ENCODE measurements at regions of chr12 and their contacts with region 1.

Region 1: DNA sequence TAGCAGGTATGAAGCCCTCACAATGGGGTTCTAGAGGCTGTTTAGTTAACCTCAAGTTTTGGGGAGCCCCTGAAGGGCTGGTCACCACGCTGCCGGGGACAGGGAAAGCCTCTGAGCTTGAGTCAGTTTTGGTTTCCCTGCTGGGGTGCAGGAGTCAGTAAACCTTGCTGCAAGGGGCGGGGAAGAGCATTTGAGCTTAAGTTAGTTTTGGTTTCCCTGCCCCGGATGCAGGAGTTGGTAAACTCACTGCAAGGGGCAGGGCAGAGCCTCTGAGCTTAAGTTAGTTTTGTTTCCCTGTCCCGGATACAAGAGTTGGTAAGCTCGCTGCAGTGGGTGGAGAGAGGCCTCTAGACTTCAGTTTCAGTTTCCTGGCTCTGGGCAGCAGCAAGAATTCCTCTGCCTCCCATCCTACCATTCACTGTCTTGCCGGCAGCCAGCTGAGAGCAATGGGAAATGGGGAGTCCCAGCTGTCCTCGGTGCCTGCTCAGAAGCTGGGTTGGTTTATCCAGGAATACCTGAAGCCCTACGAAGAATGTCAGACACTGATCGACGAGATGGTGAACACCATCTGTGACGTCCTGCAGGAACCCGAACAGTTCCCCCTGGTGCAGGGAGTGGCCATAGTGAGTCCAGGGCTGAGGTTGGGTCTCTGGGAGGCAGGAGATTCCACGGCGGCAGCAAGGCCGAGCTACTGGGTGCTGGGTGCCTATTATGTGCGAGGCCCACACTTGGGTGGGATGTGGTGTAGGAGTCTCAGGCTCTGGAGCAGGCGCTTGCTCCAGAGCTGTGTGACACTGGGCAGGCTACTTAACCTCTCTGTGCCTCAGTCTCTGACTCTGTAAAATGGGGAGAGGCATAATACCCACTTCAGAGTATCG is at the start of gene OAS2:
- DNase-seq: peak; percentile 51
- ATAC-seq: peak; percentile 92
- H3K4me3 Mint-ChIP-seq: peak within 1 kb of the TSS; percentile 96
- H3K27ac Mint-ChIP-seq: peak within 1 kb of the TSS; percentile 98
- H3K4me1 Mint-ChIP-seq: peaks cover 55% of the 10 kb centered on the region
- H3K27me3 Mint-ChIP-seq: no peaks in the 10 kb centered on the region
- CTCF ChIP-seq: no peak
- total RNA-seq, gene OAS2: 46.0 and 51.9 TPM in 2 replicates

Region 2: GRCh38 chr12:112906712-112907414 is 71.5 kb before region 1 on chr12 and contains the start of gene OAS1:
- CTCF ChIA-PET with region 1: interaction called, 13 read pairs
- POLR2A ChIA-PET with region 1: interaction called, 48 read pairs
- intact Hi-C with region 1: loop called (anchors 1 kb)
- DNase-seq: no peak
- ATAC-seq: peak; percentile 80
- H3K4me3 Mint-ChIP-seq: peak within 1 kb of the TSS; percentile 88
- H3K27ac Mint-ChIP-seq: peak within 1 kb of the TSS; percentile 92
- H3K4me1 Mint-ChIP-seq: peaks cover 88% of the 10 kb centered on the region
- H3K27me3 Mint-ChIP-seq: no peaks in the 10 kb centered on the region
- CTCF ChIP-seq: no peak
- total RNA-seq, gene OAS1: 27.8 and 30.6 TPM in 2 replicates

Region 3: GRCh38 chr12:112937741-112938719 is 40.4 kb before region 1 on chr12 and contains the start of gene OAS3:
- CTCF ChIA-PET with region 1: no interaction called
- POLR2A ChIA-PET with region 1: interaction called, 16 read pairs
- intact Hi-C with region 1: loop called (anchors 1 kb)
- DNase-seq: peak; percentile 55
- ATAC-seq: peak; percentile 74
- H3K4me3 Mint-ChIP-seq: peak within 1 kb of the TSS; percentile 89
- H3K27ac Mint-ChIP-seq: peak within 1 kb of the TSS; percentile 82
- H3K4me1 Mint-ChIP-seq: peaks cover 28% of the 10 kb centered on the region
- H3K27me3 Mint-ChIP-seq: no peaks in the 10 kb centered on the region
- CTCF ChIP-seq: no peak
- total RNA-seq, gene OAS3: 23.1 and 27.2 TPM in 2 replicates

Region 4: GRCh38 chr12:112992541-112993398 is 14.4 kb after region 1 on chr12:
- CTCF ChIA-PET with region 1: interaction called, 31 read pairs
- POLR2A ChIA-PET with region 1: interaction called, 33 read pairs
- intact Hi-C with region 1: loop called (anchors 1 kb)
- DNase-seq: no peak
- ATAC-seq: peak; percentile 72
- H3K4me3 Mint-ChIP-seq: no peak overlapping the region
- H3K27ac Mint-ChIP-seq: peak overlapping the region; percentile 59
- H3K4me1 Mint-ChIP-seq: peaks cover 29% of the 10 kb centered on the region
- H3K27me3 Mint-ChIP-seq: no peaks in the 10 kb centered on the region
- CTCF ChIP-seq: peak; percentile 34

Region 5: GRCh38 chr12:113005754-113006153 is 27.4 kb after region 1 on chr12:
- CTCF ChIA-PET with region 1: no interaction called
- POLR2A ChIA-PET with region 1: interaction called, 16 read pairs
- intact Hi-C with region 1: no loop called
- DNase-seq: no peak
- ATAC-seq: no peak
- H3K4me3 Mint-ChIP-seq: no peak overlapping the region
- H3K27ac Mint-ChIP-seq: no peak overlapping the region
- H3K4me1 Mint-ChIP-seq: no peaks in the 10 kb centered on the region
- H3K27me3 Mint-ChIP-seq: no peaks in the 10 kb centered on the region
- CTCF ChIP-seq: no peak

Region 6: GRCh38 chr12:113358381-113359132 is 380.2 kb after region 1 on chr12 and contains the start of gene PLBD2:
- CTCF ChIA-PET with region 1: no interaction called
- POLR2A ChIA-PET with region 1: no interaction called
- intact Hi-C with region 1: loop called (anchors 1 kb)
- DNase-seq: peak; percentile 90
- ATAC-seq: peak; percentile 97
- H3K4me3 Mint-ChIP-seq: peak within 1 kb of the TSS; percentile 91
- H3K27ac Mint-ChIP-seq: peak within 1 kb of the TSS; percentile 88
- H3K4me1 Mint-ChIP-seq: peaks cover 11% of the 10 kb centered on the region
- H3K27me3 Mint-ChIP-seq: no peaks in the 10 kb centered on the region
- CTCF ChIP-seq: no peak
- total RNA-seq, gene PLBD2: 11.5 and 13.7 TPM in 2 replicates

Measured in activated B cell treated with CpG ODN at 0.5 μM for 24 hours (primary cell).